ENCODE measurements at regions of chrX and their contacts with region 1.

Region 1: GRCh38 chrX:78109458-78109857 is 5.4 kb downstream of the PGK1 start:
- DNase-seq: no peak
- H3K4me3 Mint-ChIP-seq: peak overlapping the region; percentile 97
- H3K27ac Mint-ChIP-seq: peak overlapping the region; percentile 72
- H3K4me1 Mint-ChIP-seq: peaks cover 20% of the 10 kb centered on the region
- H3K27me3 Mint-ChIP-seq: no peaks in the 10 kb centered on the region

Region 2: GRCh38 chrX:78123190-78123589 is 13.7 kb after region 1 on chrX:
- intact Hi-C with region 1: loop called (anchors 2 kb)
- DNase-seq: no peak
- H3K4me3 Mint-ChIP-seq: peak overlapping the region; percentile 33
- H3K27ac Mint-ChIP-seq: peak overlapping the region; percentile 85
- H3K4me1 Mint-ChIP-seq: peaks cover 37% of the 10 kb centered on the region
- H3K27me3 Mint-ChIP-seq: no peaks in the 10 kb centered on the region

Region 3: DNA sequence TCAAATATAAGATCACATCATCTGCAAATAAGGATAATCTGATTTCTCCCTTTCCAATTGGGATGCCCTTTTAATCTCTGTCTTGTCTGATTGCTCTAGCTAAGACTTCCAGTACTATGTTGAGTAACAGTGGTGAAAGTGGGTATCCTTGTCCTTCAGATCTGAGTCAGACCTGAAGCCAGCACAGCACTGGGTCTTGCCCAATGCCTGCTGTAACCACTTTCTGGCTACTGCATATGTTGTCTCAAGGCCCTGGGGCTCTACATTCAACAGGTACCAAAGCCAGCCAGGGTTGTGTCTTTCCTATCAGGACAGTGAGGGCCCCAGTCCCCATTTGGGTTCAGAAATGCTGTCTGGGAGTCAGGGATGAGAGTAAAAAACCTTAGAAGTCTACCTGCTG is 127.7 kb after region 1 on chrX:
- intact Hi-C with region 1: no loop called
- DNase-seq: no peak
- H3K4me3 Mint-ChIP-seq: no peak overlapping the region
- H3K27ac Mint-ChIP-seq: no peak overlapping the region
- H3K4me1 Mint-ChIP-seq: no peaks in the 10 kb centered on the region
- H3K27me3 Mint-ChIP-seq: no peaks in the 10 kb centered on the region

Region 4: GRCh38 chrX:78614264-78614663 is 504.8 kb after region 1 on chrX:
- intact Hi-C with region 1: no loop called
- DNase-seq: no peak
- H3K4me3 Mint-ChIP-seq: no peak overlapping the region
- H3K27ac Mint-ChIP-seq: no peak overlapping the region
- H3K4me1 Mint-ChIP-seq: no peaks in the 10 kb centered on the region
- H3K27me3 Mint-ChIP-seq: peaks cover 2% of the 10 kb centered on the region